Activated CD4-positive, alpha-beta memory T cell treated with anti-CD3 and anti-CD28 coated beads for 36 hours (primary cell): ENCODE measurements at regions of chr5 and their contacts with region 1.

Region 1: DNA sequence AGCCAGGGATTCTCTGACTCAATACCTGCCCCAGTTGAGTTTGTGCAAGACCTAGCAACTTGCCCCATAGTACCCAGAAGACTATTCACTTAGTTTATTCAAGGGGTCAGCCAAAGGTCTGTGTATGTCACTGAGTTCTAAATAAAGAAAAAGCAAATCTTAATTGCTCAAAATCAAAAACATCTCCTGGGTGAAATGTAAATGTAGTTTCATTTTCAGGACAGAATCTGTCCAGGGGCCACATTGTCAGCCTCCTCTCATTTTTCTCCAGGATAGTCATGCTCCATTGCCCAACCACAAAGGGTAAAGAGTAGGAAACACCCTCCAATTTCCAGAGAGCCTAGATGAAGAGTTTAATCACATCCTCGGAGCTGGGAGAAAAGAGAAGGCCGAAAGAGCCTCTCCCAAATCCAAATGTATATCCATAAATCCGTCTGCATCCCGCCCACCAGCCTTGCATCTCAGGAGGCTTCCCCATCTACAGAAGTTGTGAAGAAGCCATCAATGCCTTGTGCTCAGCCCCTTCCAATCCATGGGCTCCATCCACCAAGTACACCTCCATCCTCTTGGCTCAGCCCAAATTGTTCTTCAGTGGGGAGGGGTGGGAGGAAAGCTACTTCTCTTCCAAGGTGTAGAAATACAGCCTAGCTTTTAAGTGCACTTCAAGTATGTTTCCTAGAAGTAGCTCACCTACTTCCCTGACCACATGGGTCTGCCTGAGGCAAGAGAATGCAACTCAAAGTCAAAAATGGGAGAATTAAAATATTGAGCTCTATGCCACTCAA is 26.9 kb downstream of the ADAM19 start:
- DNase-seq: no peak
- H3K4me3 Mint-ChIP-seq: peak overlapping the region; percentile 20
- H3K27ac Mint-ChIP-seq: peak overlapping the region; percentile 69
- H3K4me1 Mint-ChIP-seq: peaks cover 91% of the 10 kb centered on the region
- H3K27me3 Mint-ChIP-seq: no peaks in the 10 kb centered on the region

Region 2: GRCh38 chr5:157575381-157576020 is 26.8 kb after region 1 on chr5 and contains the start of gene ADAM19:
- CTCF ChIA-PET with region 1: interaction called, 8 read pairs
- POLR2A ChIA-PET with region 1: interaction called, 3 read pairs
- intact Hi-C with region 1: loop called (anchors 1 kb)
- DNase-seq: peak; percentile 67
- H3K4me3 Mint-ChIP-seq: peak within 1 kb of the TSS; percentile 92
- H3K27ac Mint-ChIP-seq: peak within 1 kb of the TSS; percentile 87
- H3K4me1 Mint-ChIP-seq: peaks cover 60% of the 10 kb centered on the region
- H3K27me3 Mint-ChIP-seq: no peaks in the 10 kb centered on the region
- total RNA-seq, gene ADAM19: 107 to 111 TPM